Vagina (tissue), 2 donors: ENCODE measurements at regions of chr16 and their contacts with region 1.

Region 1: DNA sequence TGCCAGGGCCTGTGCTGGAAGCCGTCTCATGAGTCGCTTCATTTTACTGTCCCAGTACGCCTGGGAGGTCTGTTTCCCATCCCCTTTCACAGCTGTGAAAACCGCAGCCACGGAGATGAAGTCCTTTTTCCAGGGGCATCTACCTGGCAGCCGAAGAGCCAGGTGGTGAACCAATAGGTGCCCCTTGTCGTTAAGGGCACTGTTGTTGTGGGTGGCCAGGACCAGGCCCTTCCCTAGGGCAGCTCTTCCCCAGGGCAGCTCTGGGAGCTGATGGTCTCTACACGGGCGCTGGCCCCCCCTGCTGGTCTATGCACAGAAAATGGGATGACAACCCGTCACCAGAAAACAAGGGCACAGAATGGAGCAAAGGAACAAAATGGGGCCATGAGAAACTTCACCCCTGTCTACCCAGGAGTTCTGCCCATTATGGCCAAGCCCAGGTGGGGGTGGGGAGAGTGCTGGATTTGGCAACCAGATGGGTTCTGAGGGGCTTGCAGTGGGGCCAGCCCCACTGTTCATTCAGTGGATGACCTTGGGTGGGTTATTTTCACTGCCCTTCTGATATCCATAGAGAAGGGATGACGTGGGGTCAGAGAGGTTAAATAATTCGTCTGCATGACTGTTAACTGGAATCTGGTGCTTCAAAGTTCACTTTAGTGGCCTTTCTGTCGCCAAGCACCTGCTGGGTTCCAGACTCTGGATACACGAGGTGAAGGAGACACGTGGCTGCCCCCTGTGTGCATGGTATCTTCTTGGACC is 11.5 kb downstream of the RMI2 start:
- DNase-seq: no peak
- H3K4me3 ChIP-seq: no peak overlapping the region
- H3K27ac ChIP-seq: peak overlapping the region; percentile 65
- H3K4me1 ChIP-seq: peaks cover 73% of the 10 kb centered on the region
- H3K27me3 ChIP-seq: no peaks in the 10 kb centered on the region
- CTCF ChIP-seq: peak; percentile 19 to 47 (median 46)
- POLR2A ChIP-seq: no peak

Region 2: DNA sequence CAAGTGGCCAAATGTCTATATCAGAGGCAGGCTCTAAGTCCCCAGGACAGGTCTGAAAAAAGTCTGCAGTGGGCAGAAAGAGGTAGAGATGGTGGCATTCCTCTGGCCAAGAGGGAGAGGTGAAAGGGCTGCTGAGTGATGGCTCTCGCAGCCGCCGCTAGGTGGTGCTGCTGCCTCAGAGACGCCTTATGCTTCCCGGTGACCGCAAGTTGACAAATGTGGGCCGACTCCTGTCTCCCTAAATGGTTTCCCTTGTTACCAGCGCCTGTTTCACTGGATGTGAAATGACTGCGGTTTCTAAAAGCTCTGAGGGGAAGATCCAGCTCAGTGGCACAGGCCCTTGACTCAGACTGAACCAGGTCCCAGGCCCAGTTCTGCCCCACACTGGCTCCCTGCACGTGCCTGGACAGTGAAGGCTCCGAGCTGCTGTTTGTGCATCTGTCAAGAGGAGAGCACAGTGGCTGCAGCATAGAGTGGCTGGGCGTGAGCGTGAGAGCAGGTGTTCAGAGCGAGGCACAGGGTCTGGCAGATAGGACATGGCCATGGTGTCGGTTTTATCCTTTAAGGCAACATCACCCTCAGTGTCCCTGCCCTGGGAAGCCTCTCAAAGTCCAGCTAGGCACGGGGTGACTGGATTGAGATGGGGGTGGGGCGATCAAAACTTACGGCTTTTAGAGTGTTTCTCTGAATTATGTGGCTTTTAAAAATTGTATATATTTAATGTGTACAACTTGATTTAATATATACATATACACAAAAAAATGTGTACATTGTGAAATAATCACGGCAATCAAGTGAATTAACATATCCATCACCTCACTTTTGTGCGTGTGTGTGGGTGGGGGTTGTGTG is 392.5 kb before region 1 on chr16:
- intact Hi-C with region 1: loop called (anchors 5 kb)
- DNase-seq: no peak
- H3K4me3 ChIP-seq: no peak overlapping the region
- H3K27ac ChIP-seq: peak overlapping the region; percentile 36
- H3K4me1 ChIP-seq: peaks cover 6% of the 10 kb centered on the region
- H3K27me3 ChIP-seq: no peaks in the 10 kb centered on the region
- CTCF ChIP-seq: peak; percentile 80 to 96 (median 95)
- POLR2A ChIP-seq: no peak